RWPE1 (cell line): ENCODE measurements at regions of chr1 and their contacts with region 1.

Region 1: DNA sequence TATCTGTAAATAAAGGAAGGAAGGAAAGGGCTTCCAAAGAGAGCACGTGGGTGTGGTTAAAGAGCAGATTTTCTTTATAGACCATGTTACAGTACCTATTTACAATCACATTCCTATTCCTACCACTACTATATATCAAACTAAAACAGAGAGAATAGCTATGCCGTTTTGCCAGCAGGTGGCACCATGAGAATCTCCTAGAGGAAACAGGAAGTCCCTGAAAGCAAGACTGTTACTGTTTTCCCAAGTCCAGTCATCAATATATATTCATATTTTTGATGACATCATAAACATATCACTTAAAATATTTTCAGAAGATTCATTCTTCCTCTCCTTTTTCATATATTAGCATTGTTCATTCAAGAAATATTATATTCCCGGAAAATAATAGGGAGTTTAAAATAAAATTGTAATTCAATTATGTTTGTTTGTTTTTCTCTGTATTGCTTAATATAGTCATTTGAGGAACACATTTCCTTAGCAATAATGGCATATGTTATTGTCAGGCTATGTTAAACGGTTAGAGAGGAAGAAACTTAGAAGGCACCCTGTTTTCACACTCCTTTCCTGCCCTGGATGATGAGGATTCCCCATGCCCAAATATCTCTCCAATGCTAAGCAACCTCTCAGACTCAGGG is 6.6 kb downstream of the CCDC190 start:
- DNase-seq: peak; percentile 70
- H3K27ac ChIP-seq: no peak overlapping the region
- CTCF ChIP-seq: peak; percentile 81

Region 2: DNA sequence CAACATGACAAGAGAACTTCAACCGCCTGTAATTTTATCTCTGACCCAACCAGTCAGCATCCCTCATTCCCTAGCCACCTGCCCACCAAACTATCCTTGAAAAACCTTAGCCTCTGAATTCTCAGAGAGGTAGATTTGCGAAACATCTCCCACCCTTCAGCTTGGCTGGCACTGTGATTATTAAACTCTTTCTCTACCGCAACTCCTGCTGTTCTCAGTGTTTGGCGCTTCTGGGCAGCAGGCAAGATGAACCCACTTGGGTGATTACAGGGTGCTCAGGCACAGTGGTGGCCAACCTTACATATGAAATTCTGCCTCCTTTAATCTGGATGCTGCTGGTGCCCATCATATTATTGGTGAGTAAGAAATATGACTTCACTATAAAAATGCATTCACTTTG is 15.5 kb before region 1 on chr1:
- CTCF ChIA-PET with region 1: no interaction called
- POLR2A ChIA-PET with region 1: no interaction called
- DNase-seq: no peak
- H3K27ac ChIP-seq: no peak overlapping the region
- CTCF ChIP-seq: no peak

Region 3: DNA sequence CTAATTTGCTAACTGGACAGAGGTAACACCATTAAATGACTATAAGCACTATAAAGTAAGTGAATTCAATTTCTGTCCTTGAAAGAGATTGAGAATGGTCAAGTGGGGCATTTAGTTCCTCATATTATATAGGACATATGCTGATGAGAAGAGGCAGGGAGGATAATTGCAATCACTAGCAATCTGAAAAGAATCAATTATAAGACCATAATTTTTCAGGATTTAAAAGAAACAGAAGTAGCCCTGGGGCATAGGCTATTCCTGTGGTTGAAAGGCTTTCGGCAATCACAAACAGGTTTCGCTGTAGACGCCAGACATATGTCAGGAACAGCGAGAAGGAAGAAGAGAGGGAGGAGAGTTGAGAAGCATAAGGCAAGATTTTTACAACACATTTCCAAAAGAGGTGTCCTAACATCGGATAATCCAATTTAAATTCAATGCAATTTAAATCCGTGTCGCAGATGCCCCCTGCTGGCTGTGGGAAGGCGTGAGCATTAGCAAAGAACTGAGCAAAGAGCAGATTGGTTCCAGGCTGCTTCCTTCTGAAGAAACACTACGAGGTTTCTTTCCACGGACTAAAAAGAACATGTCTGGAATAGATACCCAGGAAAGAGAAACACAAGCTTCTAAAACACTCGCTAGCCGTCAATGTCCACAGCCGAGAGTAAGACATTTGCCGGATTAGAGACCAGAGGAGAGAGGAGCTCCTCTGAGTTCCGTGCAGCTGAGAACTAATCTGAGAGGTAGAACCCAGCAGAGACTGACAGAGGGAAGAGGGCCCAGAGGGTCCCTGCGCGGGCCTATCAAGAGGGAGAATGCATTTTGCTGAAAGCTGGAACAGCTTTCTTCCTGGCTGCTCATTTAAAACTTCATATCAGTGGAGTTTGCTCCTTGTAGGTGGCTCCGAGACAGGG is 320.4 kb after region 1 on chr1:
- CTCF ChIA-PET with region 1: interaction called, 10 read pairs
- POLR2A ChIA-PET with region 1: no interaction called
- DNase-seq: peak; percentile 36
- H3K27ac ChIP-seq: no peak overlapping the region
- CTCF ChIP-seq: peak; percentile 84